Ascending aorta (tissue), 2 donors: ENCODE measurements at regions of chr9 and their contacts with region 1.

Region 1: GRCh38 chr9:122350638-122351355 is 20.0 kb upstream of the PTGS1 start:
- DNase-seq: peak in 1 of 2 donors; percentile 89
- H3K4me3 ChIP-seq: no peak overlapping the region
- H3K27ac ChIP-seq: no peak overlapping the region
- H3K4me1 ChIP-seq: peaks cover 0 to 7% of the 10 kb centered on the region in 2 donors
- H3K27me3 ChIP-seq: no peaks in the 10 kb centered on the region
- CTCF ChIP-seq: peak; percentile 89 to 94 (median 94)

Region 2: DNA sequence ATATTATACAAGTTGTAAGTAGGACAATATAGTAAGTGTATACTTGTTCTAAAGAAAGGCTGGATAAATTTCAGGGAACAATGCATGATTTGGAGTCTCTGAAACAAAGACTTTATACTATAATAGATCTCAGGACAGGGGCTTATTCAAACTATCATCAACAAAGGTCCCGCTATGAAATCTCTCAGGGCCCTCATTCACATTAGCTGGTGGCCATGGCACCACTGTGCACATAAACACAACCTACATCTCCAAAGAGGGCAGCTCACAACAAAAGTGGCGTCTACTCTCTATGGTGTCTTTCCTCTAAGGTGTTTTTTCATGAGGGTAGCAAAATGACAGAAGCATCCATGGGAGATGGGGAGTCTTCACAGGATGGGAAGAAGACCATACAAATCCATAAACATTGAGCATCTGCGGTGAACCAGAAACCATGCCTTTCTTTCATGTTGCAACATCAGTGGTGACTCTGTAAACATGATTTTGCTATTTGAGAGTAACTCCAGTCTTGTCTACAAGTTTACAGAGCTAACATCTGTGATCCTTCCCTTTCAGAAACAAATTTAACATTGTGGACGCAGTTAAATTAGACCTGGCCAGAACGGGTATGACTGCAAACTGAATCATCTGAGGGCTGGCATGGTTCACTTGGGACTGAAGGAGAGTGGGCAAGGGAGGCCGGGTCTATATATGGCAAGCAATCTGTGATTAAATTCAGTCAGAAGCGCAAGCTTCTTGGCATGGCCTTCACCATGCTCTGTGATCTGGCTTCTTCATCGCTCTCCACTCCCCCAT is 263.2 kb before region 1 on chr9:
- intact Hi-C with region 1: no loop called
- DNase-seq: peak; percentile 30 to 84
- H3K4me3 ChIP-seq: peak overlapping the region in 1 of 2 donors; percentile 25
- H3K27ac ChIP-seq: peak overlapping the region; percentile 73 to 92
- H3K4me1 ChIP-seq: peaks cover 13 to 41% of the 10 kb centered on the region in 2 donors
- H3K27me3 ChIP-seq: no peaks in the 10 kb centered on the region
- CTCF ChIP-seq: no peak

Region 3: GRCh38 chr9:122099271-122099869 is 251.4 kb before region 1 on chr9:
- intact Hi-C with region 1: loop called (anchors 1 kb)
- DNase-seq: peak; percentile 15 to 90
- H3K4me3 ChIP-seq: peak overlapping the region in 1 of 2 donors; percentile 25
- H3K27ac ChIP-seq: no peak overlapping the region
- H3K4me1 ChIP-seq: no peaks in the 10 kb centered on the region
- H3K27me3 ChIP-seq: no peaks in the 10 kb centered on the region
- CTCF ChIP-seq: peak; percentile 77 to 88 (median 82)

Region 4: GRCh38 chr9:122332083-122332482 is 18.7 kb before region 1 on chr9:
- intact Hi-C with region 1: no loop called
- DNase-seq: no peak
- H3K4me3 ChIP-seq: no peak overlapping the region
- H3K27ac ChIP-seq: no peak overlapping the region
- H3K4me1 ChIP-seq: no peaks in the 10 kb centered on the region
- H3K27me3 ChIP-seq: no peaks in the 10 kb centered on the region
- CTCF ChIP-seq: no peak